Activated CD4-positive, alpha-beta T cell treated with anti-CD3 and anti-CD28 coated beads, Interleukin-2, amount 10 ng/mL, durations not matched to agents 24 days and 14 days (primary cell): ENCODE measurements at regions of chr10 and their contacts with region 1.

Region 1: DNA sequence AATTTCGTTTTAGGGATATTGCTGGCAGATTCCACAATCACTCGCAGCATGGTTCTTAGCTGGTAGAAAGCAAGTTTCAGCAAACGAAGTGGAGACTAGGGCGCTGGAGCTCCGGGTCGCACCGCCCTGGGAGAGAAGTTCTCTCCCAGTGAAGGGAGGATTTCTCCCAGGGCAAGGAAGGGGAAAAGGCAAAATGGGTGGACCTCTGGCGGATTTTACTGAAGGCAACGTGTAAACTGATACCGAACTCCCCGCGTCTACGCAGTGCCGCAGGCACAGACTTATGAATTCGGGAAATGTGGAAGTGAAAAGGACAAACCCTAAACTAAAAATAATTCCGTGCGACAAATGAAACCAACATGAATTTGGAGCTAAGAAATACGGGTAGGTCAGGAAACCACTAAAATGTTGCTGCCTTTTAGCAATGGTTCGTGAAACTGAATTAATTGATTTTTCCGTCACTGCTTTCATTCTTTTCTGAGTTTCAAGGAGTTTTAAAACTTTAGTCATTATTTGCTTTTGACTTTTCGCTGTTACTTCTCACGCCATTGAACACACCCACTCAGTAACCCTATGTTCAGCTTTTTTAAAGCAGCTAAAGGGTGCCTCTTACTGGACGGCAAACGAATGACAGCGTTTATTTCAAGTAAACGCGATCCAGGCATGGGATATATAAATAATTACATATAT is at the start of gene MYOF:
- DNase-seq: peak; percentile 88
- H3K4me3 Mint-ChIP-seq: peak within 1 kb of the TSS; percentile 89
- H3K27ac Mint-ChIP-seq: peak within 1 kb of the TSS; percentile 89
- H3K4me1 Mint-ChIP-seq: peaks cover 23% of the 10 kb centered on the region
- H3K27me3 Mint-ChIP-seq: peaks cover 2% of the 10 kb centered on the region
- total RNA-seq, gene MYOF: 23.8 and 25.4 TPM in 2 replicates

Region 2: GRCh38 chr10:93080350-93081046 is 401.8 kb before region 1 on chr10:
- intact Hi-C with region 1: loop called (anchors 10 kb)
- DNase-seq: peak; percentile 83
- H3K4me3 Mint-ChIP-seq: no peak overlapping the region
- H3K27ac Mint-ChIP-seq: no peak overlapping the region
- H3K4me1 Mint-ChIP-seq: peaks cover 7% of the 10 kb centered on the region
- H3K27me3 Mint-ChIP-seq: peaks cover 41% of the 10 kb centered on the region

Region 3: GRCh38 chr10:93376372-93377293 is 105.7 kb before region 1 on chr10:
- intact Hi-C with region 1: loop called (anchors 1 kb)
- DNase-seq: peak; percentile 90
- H3K4me3 Mint-ChIP-seq: no peak overlapping the region
- H3K27ac Mint-ChIP-seq: peak overlapping the region; percentile 55
- H3K4me1 Mint-ChIP-seq: peaks cover 30% of the 10 kb centered on the region
- H3K27me3 Mint-ChIP-seq: no peaks in the 10 kb centered on the region

Region 4: DNA sequence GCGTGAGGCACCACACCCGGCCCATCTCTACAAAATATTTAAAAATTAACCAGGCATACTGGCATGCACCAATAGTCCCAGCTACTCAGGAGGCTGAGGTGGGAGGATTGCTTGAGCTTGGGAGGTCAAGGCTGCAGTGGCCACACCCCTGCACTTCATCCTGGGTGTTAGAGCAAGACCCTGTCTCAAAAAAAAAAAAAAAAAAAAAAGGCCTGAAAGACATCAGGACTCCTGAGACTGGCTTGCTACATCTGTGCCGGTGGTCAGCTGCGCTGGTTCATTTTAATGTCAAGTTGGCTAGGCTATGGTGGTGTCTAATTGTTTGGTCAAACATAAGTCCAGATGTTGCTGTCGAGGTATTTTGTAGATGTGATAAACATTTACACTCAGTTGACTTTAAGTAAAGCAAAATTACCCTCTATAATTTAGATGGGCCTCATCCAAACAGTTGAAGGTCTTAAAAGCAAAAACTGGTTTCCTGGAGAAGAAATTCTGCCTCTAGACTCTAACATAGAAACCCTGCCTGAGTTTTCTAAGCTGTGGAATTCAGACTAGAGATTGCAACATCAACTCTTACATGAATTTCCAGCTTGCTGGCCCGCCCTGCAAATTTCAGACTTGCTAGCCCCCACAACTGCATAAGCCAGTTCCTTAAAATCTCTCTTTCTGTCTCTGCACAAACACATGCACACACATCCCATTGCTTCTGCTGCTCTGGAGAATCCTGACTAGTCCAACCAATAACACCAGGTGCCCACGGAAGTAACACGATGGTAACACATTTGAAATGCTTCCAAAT is 18.4 kb before region 1 on chr10:
- intact Hi-C with region 1: loop called (anchors 1 kb)
- DNase-seq: no peak
- H3K4me3 Mint-ChIP-seq: no peak overlapping the region
- H3K27ac Mint-ChIP-seq: peak overlapping the region; percentile 35
- H3K4me1 Mint-ChIP-seq: peaks cover 15% of the 10 kb centered on the region
- H3K27me3 Mint-ChIP-seq: no peaks in the 10 kb centered on the region

Region 5: DNA sequence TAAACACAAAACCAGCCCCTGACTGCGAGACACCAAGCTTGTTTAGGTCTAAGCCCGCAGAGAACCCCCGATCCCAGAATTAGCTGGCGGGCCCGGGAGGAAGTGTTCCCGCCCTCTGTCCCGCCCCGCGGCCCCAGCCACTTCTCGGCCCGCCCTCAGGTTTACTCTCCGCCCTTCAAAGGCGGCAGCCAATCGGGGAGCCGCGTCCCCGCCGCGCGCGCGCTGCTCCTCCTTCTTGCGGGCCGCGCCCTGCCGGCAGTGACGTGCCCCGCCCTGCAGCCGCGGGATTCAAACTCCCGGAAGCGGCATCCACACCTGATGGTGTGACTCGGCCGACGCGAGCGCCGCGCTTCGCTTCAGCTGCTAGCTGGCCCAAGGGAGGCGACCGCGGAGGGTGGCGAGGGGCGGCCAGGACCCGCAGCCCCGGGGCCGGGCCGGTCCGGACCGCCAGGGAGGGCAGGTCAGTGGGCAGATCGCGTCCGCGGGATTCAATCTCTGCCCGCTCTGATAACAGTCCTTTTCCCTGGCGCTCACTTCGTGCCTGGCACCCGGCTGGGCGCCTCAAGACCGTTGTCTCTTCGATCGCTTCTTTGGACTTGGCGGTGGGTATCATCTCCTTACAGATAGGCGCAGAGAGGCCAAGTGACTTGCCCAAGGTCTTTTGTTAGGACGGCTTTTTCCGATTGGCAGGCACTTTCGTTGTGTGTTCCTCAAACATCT is 14.2 kb after region 1 on chr10 and contains the start of gene CEP55:
- intact Hi-C with region 1: loop called (anchors 1 kb)
- DNase-seq: peak; percentile 99
- H3K4me3 Mint-ChIP-seq: peak within 1 kb of the TSS; percentile 90
- H3K27ac Mint-ChIP-seq: peak within 1 kb of the TSS; percentile 93
- H3K4me1 Mint-ChIP-seq: peaks cover 34% of the 10 kb centered on the region
- H3K27me3 Mint-ChIP-seq: no peaks in the 10 kb centered on the region
- total RNA-seq, gene CEP55: 58.5 and 59.3 TPM in 2 replicates

Region 6: GRCh38 chr10:93515071-93516005 is 33.0 kb after region 1 on chr10:
- intact Hi-C with region 1: loop called (anchors 1 kb)
- DNase-seq: no peak
- H3K4me3 Mint-ChIP-seq: no peak overlapping the region
- H3K27ac Mint-ChIP-seq: no peak overlapping the region
- H3K4me1 Mint-ChIP-seq: peaks cover 3% of the 10 kb centered on the region
- H3K27me3 Mint-ChIP-seq: no peaks in the 10 kb centered on the region